Cardiac septum (tissue), 1 donor: ENCODE measurements at regions of chr12 and their contacts with region 1.

Region 1: DNA sequence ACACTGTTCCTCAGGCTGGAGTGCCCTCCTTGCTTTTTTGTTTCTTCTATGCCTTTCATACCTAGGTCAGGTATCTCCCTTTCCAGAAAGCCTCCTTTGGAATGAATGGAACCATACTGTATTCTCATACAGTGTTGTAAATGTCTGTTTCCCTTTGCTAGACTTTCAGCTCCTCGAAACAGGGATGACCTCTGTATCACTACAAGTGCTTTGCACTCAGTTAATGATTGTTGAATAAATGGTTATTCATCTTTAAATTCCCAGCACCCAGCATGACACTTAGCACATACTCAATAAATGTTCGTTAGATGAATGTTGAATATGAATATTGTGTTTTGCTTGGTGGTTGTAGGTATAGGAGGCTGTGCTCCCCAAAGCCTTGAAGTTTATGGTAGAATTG is 5.9 kb upstream of the TULP3 start:
- DNase-seq: no peak

Region 2: DNA sequence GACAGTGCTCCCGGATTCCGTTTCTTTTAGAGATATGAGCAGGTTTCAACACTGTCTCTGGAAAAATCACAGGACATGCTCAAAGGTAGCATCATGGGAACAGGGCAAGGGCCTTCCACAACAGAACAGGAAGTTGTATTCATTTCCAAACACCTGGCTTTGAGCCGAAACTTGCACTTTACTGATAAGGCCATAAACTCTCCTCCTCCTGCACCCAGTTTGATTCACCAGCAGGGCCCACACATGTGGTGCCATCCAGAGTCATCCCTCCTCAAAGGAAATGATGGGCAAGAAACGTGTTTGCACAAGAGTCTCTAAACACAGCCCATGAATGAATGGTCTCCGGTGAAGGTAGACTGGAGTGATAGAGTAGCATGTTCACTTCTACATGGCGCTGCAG is 358.4 kb before region 1 on chr12:
- intact Hi-C with region 1: no loop called
- DNase-seq: no peak

Region 3: DNA sequence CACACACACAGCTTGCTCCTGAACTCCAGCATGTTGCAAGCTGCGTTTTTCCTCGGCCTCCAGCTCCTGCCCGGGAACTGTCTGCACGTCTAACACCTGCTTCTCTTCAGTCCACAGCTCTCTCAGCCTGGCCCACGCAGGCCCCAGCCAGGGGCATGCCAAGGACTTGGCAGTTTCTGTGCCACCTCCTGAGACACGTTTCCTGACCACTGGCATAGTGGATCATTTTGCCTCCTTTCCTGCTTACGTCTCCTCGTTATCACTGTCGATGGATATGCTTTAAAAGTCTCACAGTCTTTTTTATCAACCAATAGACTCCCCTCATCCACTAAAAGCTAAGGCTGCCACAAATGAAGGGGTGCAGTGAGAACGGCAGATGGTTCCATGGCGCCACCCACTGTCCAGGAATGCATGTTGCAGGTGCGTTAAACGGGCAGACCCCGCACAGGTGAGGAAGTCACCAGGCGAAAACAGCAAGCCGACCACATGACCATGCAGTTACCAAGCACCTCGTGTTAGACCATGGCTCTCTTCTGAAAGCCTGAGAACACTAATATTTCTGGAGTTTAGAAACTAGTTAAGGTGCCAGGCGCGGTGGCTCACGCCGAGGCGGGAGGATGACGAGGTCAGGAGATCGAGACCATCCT is 59.7 kb after region 1 on chr12:
- intact Hi-C with region 1: loop called (anchors 5 kb)
- DNase-seq: peak; percentile 75

Region 4: GRCh38 chr12:3034067-3034750 is 149.4 kb after region 1 on chr12:
- intact Hi-C with region 1: loop called (anchors 2 kb)
- DNase-seq: no peak